Cardiac septum (tissue), 1 donor: ENCODE measurements at regions of chr17 and their contacts with region 1.

Region 1: GRCh38 chr17:76506408-76507349 is 5.5 kb upstream of the RHBDF2 start:
- DNase-seq: peak; percentile 93

Region 2: DNA sequence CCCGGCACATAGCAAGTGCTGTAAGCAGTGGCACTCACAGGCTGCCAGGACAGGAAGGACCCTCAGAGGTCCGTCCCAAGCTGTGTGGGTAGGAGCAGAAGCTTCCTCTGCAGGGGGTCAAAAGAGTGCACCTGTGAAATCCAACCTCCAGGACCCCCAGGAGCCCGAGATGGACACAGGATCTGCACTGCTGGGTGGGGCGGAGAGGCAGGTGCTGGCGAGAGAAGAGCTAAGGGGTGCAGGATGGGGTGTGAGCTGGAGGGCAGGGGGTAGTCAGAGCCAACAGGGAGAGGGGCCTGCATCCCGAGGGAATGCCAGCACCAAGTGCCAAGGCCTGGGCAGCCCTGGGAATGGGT is 39.9 kb before region 1 on chr17:
- intact Hi-C with region 1: loop called (anchors 1 kb)
- DNase-seq: no peak

Region 3: DNA sequence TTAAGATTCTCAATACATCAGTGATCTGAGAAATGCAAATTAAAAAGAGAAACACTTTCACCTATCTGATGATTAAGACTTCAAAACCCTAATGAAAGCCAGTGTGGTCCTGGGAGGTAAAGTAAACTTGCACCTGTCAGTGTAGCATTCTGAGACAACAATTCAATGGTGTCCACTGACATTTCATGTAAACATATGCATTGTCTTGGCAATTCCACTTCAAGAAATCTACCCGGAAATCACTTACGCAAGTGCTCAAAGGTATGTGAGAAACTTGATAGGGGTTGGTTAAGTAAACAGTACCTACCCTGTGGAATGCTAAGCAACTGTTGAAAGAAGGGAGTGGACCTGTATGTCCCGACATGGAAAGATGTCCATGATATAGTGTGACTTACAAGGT is 134.8 kb after region 1 on chr17:
- intact Hi-C with region 1: no loop called
- DNase-seq: no peak